Testis (tissue), 5 donors: ENCODE measurements at regions of chr10 and their contacts with region 1.

Region 1: DNA sequence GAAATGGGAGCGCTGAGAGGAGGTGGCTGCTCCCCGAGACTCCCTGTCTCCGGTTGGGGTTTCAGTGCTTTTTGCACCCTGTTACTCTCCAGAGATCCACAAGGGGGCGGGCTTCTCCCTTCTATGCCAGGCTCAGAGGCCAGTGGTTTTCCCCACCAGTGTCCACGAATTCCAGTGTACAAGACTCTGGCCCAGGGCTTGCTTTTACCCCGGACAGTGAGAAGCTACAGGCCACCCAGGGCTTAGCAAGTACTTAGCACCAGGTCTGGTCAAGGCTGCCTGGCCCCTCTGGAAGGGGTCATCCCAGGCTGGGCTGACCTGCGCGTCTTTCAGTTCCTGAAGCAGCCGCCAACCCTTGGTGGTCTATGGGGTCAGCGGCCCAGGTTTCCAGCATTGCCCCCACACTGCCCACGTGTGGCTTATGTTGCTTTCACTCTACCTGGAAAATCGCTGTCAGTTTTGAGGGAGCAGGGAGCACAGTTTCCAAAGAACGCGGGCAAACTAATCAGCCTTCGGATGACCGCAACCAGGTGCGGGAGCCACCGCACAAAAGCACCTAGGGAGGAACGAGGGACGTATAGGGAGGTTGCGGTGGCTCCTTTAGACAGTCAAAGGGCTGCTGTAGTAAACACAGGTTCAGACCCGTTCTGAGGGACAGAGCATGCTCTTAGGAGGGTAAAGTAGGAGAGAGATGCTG is 6.8 kb downstream of the CYP26A1 start:
- DNase-seq: peak; percentile 76
- H3K4me3 ChIP-seq: no peak overlapping the region
- H3K27ac ChIP-seq: no peak overlapping the region
- H3K4me1 ChIP-seq: no peaks in the 10 kb centered on the region
- H3K27me3 ChIP-seq: no peaks in the 10 kb centered on the region
- CTCF ChIP-seq: peak; percentile 75 to 82 (median 77)
- POLR2A ChIP-seq: no peak

Region 2: DNA sequence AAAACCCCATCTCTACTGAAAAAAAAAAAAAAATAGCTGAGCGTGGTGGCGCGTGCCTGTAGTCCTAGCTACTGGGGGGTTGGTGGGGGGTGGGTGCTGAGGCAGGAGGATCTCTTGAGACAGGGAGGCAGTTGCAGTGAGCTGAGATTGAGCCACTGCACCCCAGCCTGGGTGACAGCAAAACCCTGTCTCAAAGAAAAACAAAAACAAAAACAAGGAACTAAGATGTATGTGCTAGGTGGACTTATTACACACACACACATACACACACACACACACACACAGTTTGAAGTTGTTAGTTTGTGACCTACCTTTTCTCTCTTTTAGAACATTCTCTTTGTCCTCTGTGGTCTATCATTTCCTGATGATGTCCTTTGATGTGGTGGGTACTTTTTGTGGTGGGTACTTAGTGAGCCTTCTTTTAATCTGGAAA is 178.7 kb before region 1 on chr10:
- intact Hi-C with region 1: no loop called
- DNase-seq: no peak
- H3K4me3 ChIP-seq: no peak overlapping the region
- H3K27ac ChIP-seq: no peak overlapping the region
- H3K4me1 ChIP-seq: no peaks in the 10 kb centered on the region
- H3K27me3 ChIP-seq: no peaks in the 10 kb centered on the region
- CTCF ChIP-seq: no peak
- POLR2A ChIP-seq: no peak

Region 3: DNA sequence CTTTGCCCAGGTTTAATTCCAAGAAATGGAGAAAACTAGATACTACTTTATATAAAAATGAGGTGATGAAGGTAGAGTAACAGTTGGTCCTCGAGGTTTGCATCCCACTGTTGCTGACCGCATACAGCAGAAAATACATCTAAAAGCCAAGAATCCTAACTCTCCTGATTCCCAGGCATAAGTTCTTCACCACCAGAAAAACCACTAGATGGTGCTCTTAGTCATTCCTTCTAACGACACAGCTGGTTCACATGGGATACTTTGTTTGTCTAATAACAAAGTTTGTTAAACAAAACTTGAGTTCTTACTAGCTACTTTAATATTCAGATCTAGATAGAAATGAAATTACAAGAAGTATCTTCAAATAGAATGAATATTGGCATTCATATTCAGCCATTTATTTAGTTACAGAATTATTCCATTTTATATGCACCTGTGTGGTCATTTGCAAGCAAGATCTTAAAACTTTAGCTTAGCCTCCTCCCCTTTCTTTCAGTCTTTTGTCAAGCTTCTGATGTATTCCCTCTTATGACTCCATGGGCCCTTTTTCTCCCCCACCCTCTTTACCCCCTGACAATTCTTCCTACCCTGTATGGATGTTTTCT is 74.0 kb before region 1 on chr10:
- intact Hi-C with region 1: no loop called
- DNase-seq: no peak
- H3K4me3 ChIP-seq: no peak overlapping the region
- H3K27ac ChIP-seq: no peak overlapping the region
- H3K4me1 ChIP-seq: no peaks in the 10 kb centered on the region
- H3K27me3 ChIP-seq: no peaks in the 10 kb centered on the region
- CTCF ChIP-seq: peak in 2 of 3 experiments; percentile 35 to 43
- POLR2A ChIP-seq: no peak

Region 4: GRCh38 chr10:93346694-93347093 is 266.2 kb after region 1 on chr10:
- intact Hi-C with region 1: loop called (anchors 10 kb)
- DNase-seq: no peak
- H3K4me3 ChIP-seq: no peak overlapping the region
- H3K27ac ChIP-seq: no peak overlapping the region
- H3K4me1 ChIP-seq: peaks cover 7% of the 10 kb centered on the region
- H3K27me3 ChIP-seq: no peaks in the 10 kb centered on the region
- CTCF ChIP-seq: no peak
- POLR2A ChIP-seq: no peak